GM12878 (cell line): ENCODE measurements at regions of chr22 and their contacts with region 1.

Region 1: GRCh38 chr22:25318081-25318823 is 98.8 kb downstream of the CRYBB2 start:
- DNase-seq: no peak
- ATAC-seq: no peak
- H3K4me3 ChIP-seq: no peak overlapping the region
- H3K27ac ChIP-seq: no peak overlapping the region
- H3K4me1 ChIP-seq: no peaks in the 10 kb centered on the region
- H3K27me3 ChIP-seq: no peaks in the 10 kb centered on the region
- CTCF ChIP-seq: no peak
- EP300 ChIP-seq: no peak
- POLR2A ChIP-seq: no peak
- RAD21 ChIP-seq: no peak

Region 2: DNA sequence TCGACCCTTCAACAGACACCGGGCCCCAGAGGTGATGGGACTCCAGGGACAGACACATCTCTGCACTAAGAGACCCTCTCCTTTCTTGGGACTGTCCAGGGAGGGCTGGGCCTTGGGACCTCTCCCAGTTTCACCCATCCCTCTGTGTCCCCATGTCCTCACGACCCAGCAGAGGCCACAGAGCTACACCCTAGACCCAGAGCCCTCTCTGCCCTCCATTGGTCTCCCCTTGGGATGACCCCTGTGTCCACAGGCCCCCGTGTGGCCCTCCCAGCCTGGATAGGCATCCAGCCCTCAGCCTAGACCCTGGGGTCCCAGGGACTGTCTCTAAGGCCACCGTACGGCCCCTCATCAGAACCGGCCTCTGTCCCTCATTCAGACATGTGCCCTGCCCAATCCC is 1678.6 kb before region 1 on chr22:
- CTCF ChIA-PET with region 1: no interaction called
- POLR2A ChIA-PET with region 1: no interaction called
- RAD21 ChIA-PET with region 1: no interaction called
- SMC1A ChIA-PET with region 1: no interaction called
- in situ Hi-C with region 1: loop called (anchors 5 kb)
- intact Hi-C with region 1: no loop called
- DNase-seq: no peak
- ATAC-seq: no peak
- H3K4me3 ChIP-seq: no peak overlapping the region
- H3K27ac ChIP-seq: no peak overlapping the region
- H3K4me1 ChIP-seq: no peaks in the 10 kb centered on the region
- H3K27me3 ChIP-seq: no peaks in the 10 kb centered on the region
- CTCF ChIP-seq: no peak
- EP300 ChIP-seq: no peak
- POLR2A ChIP-seq: no peak
- RAD21 ChIP-seq: no peak

Region 3: GRCh38 chr22:25536589-25536988 is 218.3 kb after region 1 on chr22:
- CTCF ChIA-PET with region 1: no interaction called
- POLR2A ChIA-PET with region 1: no interaction called
- RAD21 ChIA-PET with region 1: no interaction called
- SMC1A ChIA-PET with region 1: no interaction called
- in situ Hi-C with region 1: no loop called
- intact Hi-C with region 1: no loop called
- DNase-seq: no peak
- ATAC-seq: no peak
- H3K4me3 ChIP-seq: no peak overlapping the region
- H3K27ac ChIP-seq: no peak overlapping the region
- H3K4me1 ChIP-seq: no peaks in the 10 kb centered on the region
- H3K27me3 ChIP-seq: no peaks in the 10 kb centered on the region
- CTCF ChIP-seq: no peak
- EP300 ChIP-seq: no peak
- POLR2A ChIP-seq: no peak
- RAD21 ChIP-seq: no peak